Prostate gland (tissue), 2 donors: ENCODE measurements at regions of chr9 and their contacts with region 1.

Region 1: DNA sequence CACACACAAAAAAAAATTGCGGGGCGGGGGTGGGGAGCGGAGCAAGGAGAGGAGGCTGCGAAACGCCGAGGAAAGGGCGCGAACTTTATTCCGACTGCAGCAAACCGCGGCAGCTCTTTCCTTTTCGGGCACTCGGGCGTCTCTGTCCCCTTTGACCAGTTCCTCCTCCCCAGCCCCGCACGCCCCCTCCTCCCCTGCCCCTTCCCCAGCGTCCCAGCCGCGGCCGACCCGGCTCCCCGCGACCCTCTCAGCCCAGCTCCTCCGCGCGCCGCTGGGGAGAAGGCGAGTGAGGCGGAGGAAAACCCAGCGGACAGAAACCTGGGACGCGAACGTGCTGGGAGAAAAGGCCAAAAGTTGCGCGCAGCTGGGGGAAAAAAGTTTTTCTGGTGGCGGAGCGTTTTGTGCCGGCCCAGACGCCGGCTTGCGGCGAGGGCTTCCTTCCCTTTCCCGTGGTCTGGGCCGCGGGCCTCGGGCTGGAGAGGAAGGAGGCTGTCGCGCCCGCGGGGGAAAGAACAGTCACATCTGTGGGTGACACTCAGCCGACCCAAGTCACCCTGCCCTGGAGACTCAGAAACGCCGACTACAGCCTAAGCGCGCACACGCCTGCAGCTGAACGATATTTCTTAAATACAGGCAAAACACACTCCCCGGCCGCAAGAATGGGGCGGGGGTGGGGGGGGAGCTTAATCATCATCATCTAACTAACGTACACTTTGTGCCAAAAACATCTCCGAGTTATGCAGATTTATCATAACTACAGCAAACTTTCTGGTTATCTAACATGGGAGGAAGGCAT is 1.1 kb upstream of the BNC2 start:
- DNase-seq: peak; percentile 14
- H3K4me3 ChIP-seq: peak overlapping the region; percentile 52 to 54
- H3K27ac ChIP-seq: peak overlapping the region; percentile 75 to 86
- H3K4me1 ChIP-seq: no peaks in the 10 kb centered on the region
- H3K27me3 ChIP-seq: no peaks in the 10 kb centered on the region
- CTCF ChIP-seq: no peak
- POLR2A ChIP-seq: no peak

Region 2: DNA sequence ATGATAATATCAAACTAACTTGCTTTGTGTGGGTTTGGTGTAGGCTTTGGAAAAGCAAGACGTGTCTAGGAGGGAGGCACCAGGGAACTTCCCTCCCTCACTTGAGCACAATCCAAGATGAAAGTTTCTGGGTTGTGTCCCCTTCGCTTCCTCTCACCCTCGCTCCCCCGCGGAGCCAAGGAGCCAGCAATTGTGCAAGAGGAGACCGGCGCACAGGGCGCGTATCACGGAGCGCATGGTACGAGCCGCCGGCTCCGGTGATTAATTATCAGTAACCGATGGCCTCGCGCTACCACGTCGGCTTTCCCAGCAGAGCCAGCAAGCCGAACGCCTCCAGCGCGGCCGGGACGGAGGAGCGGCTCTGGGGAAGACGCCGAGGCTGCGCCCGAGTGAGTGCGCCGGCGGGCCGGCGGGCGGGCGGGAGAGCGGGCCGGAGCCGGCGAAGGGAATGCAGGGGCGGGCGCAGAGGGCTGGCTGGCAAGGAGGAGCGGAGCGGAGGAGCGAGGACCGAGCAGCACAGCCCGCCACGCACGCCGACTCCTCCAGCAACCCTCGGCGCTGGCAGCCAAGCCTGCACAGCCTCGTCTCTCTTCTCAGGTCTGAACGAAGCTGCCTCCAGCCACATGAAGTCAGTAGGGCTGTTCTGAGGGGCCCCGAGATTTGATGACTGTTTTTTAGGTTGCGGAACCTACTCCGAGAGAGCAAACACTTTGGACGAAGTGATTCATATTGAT is 144.7 kb before region 1 on chr9:
- intact Hi-C with region 1: loop called (anchors 2 kb)
- DNase-seq: peak; percentile 69
- H3K4me3 ChIP-seq: peak overlapping the region; percentile 40 to 43
- H3K27ac ChIP-seq: peak overlapping the region; percentile 80 to 88
- H3K4me1 ChIP-seq: no peaks in the 10 kb centered on the region
- H3K27me3 ChIP-seq: no peaks in the 10 kb centered on the region
- CTCF ChIP-seq: no peak
- POLR2A ChIP-seq: no peak

Region 3: GRCh38 chr9:16828340-16829281 is 42.9 kb before region 1 on chr9:
- intact Hi-C with region 1: loop called (anchors 5 kb)
- DNase-seq: no peak
- H3K4me3 ChIP-seq: peak overlapping the region; percentile 20 to 21
- H3K27ac ChIP-seq: peak overlapping the region in 1 of 2 donors; percentile 55
- H3K4me1 ChIP-seq: no peaks in the 10 kb centered on the region
- H3K27me3 ChIP-seq: no peaks in the 10 kb centered on the region
- CTCF ChIP-seq: no peak
- POLR2A ChIP-seq: no peak